ENCODE measurements at regions of chr12 and their contacts with region 1.

Region 1: GRCh38 chr12:56987551-56988053 is 18.7 kb downstream of the ZBTB39 start:
- DNase-seq: peak; percentile 76 to 84
- H3K4me3 ChIP-seq: no peak overlapping the region
- H3K27ac ChIP-seq: no peak overlapping the region
- H3K4me1 ChIP-seq: peaks cover 0 to 22% of the 10 kb centered on the region in 2 donors
- H3K27me3 ChIP-seq: no peaks in the 10 kb centered on the region
- CTCF ChIP-seq: peak; percentile 91 to 97 (median 92)
- POLR2A ChIP-seq: no peak

Region 2: DNA sequence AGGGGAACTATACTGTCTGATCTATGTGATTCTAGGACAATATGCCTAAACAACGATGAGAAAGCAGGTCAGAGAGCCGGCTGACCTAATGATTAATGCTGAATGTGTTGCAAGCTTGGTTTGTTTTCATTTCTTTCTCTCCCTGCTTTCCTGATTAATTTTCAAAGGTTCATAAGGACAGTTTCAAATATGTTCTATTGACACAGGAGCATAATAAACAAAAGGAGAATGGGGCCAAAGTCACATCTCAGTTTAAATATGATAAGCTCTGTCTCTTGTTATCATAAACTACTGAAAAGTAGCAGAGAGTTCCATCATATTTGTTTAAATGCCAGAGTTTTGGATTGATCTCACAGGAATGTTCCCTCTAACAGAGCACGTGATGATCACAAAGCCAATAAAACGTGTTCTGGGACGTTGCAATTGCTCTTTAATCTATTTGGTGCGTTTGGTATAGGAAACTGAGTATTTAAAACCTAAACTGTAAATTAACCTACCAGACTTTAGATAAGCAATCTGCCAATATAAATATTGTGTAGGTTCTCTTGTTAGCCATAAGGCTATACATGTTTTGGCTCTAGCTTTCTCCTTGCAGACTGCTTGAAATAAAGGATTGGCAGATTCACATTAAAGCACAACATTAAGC is 228.2 kb before region 1 on chr12:
- intact Hi-C with region 1: loop called (anchors 5 kb)
- DNase-seq: no peak
- H3K4me3 ChIP-seq: no peak overlapping the region
- H3K27ac ChIP-seq: no peak overlapping the region
- H3K4me1 ChIP-seq: no peaks in the 10 kb centered on the region
- H3K27me3 ChIP-seq: no peaks in the 10 kb centered on the region
- CTCF ChIP-seq: no peak
- POLR2A ChIP-seq: no peak

Region 3: DNA sequence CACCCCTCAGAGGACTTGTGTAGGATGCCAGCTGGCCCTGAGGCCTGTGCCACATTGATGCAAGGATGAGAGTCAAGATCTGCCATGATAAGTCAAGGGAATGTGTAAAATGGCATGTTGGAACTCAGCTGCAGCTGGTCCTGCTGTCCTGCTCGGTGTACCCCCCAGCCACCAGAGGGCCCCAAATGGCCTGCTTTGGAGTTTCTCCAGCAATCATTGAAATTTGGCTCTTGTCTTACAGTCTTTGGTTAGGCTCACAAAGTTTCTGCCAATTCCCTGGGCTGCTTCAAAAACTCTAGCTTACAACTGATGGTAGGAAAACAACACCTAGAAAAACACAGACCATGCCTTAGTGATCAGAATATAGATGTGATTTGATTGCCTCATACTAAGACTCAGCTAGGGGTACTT is 147.7 kb before region 1 on chr12:
- intact Hi-C with region 1: loop called (anchors 10 kb)
- DNase-seq: peak; percentile 60 to 63
- H3K4me3 ChIP-seq: no peak overlapping the region
- H3K27ac ChIP-seq: peak overlapping the region; percentile 14 to 68 (median 48)
- H3K4me1 ChIP-seq: peaks cover 40 to 57% of the 10 kb centered on the region in 2 donors
- H3K27me3 ChIP-seq: no peaks in the 10 kb centered on the region
- CTCF ChIP-seq: peak in 4 of 6 experiments; percentile 42 to 63 (median 54)
- POLR2A ChIP-seq: no peak

Measured in thyroid gland (tissue), 4 donors.